ENCODE measurements at regions of chr10 and their contacts with region 1.

Region 1: GRCh38 chr10:12333380-12334185 is 15.8 kb upstream of the CAMK1D start:
- DNase-seq: peak; percentile 68
- CTCF ChIP-seq: no peak

Region 2: DNA sequence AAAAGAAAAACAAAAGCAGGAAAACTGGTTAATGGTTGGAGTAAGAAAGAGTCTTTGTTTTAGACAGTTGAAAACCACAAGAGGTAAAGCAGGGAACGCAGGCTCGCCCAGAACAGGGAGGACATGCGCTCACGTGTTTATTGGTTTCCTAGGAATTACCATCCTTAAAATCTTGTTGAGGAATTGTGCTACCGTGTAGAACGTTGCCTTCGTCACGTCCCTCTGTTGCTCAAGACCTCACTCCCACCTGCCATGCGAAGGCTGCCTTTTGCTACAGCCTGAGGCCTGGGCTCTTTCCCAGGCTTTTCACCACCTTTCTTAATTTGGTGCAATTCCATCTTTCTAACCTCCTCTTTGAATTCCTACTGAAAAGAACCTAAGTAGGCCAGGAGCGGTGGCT is 45.8 kb before region 1 on chr10:
- CTCF ChIA-PET with region 1: no interaction called
- POLR2A ChIA-PET with region 1: no interaction called
- DNase-seq: no peak
- CTCF ChIP-seq: no peak

Region 3: GRCh38 chr10:12322583-12323131 is 10.9 kb before region 1 on chr10:
- CTCF ChIA-PET with region 1: interaction called, 12 read pairs
- POLR2A ChIA-PET with region 1: interaction called, 3 read pairs
- DNase-seq: no peak
- CTCF ChIP-seq: no peak

Region 4: DNA sequence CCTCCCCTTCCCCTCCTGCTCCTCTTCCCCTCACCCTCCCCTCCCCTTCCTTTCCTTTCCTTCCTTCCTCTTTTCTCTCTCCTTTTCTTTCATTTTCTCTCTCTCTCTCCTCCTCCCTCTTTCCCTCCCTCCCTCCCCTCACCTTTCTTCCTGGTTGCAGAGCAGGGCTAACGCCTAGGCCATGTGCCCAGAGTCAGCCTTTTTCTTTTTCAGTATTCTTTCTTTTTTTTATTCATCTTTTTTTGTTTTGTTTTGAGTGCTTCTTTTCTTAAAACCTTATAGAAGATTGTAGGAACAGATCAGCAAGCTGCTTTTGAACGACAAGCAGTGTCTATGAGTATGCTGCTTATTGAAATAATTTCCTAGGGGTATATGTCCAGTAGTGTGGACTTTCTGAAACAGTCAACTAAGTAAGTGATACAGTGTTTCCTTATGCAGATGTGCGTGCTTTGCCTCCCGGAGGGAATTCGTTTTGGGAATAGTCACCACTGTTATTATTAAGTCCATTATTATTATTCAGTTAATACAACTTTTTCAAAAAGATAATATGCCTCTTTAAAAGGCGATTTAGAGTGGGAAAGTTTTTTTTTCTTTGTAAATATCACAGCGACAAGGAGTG is 234.9 kb after region 1 on chr10:
- CTCF ChIA-PET with region 1: no interaction called
- POLR2A ChIA-PET with region 1: no interaction called
- DNase-seq: no peak
- CTCF ChIP-seq: no peak